Spleen (tissue), 13 donors: ENCODE measurements at regions of chr10 and their contacts with region 1.

Region 1: GRCh38 chr10:68156373-68157185 is 47.3 kb downstream of the MYPN start:
- DNase-seq: no peak
- H3K4me3 ChIP-seq: no peak overlapping the region
- H3K27ac ChIP-seq: no peak overlapping the region
- H3K4me1 ChIP-seq: peaks cover 0 to 26% (median 15%) of the 10 kb centered on the region in 6 donors
- H3K27me3 ChIP-seq: no peaks in the 10 kb centered on the region
- CTCF ChIP-seq: peak; percentile 55 to 85 (median 76)
- POLR2A ChIP-seq: no peak

Region 2: DNA sequence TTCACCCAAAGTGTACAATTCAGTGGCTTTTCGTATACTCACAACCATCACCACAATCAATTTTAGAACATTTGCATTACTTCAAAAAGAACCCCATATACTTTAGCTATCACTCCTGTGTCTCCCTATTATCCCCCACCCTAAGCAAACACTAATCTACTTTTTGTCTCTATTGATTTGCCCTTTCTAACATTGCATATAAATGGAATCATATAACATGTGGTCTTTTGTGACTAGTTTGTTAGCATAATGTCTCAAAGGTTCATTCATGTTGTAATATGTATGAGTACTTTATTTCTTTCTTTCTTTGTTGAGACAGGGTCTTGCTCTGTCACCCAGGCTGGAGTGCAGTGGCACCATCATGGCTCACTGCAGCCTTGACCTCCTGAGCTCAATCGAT is 297.6 kb before region 1 on chr10:
- intact Hi-C with region 1: loop called (anchors 5 kb)
- DNase-seq: no peak
- H3K4me3 ChIP-seq: no peak overlapping the region
- H3K27ac ChIP-seq: no peak overlapping the region
- H3K4me1 ChIP-seq: peaks cover 0 to 10% (median 2%) of the 10 kb centered on the region in 6 donors
- H3K27me3 ChIP-seq: no peaks in the 10 kb centered on the region
- CTCF ChIP-seq: no peak
- POLR2A ChIP-seq: no peak

Region 3: DNA sequence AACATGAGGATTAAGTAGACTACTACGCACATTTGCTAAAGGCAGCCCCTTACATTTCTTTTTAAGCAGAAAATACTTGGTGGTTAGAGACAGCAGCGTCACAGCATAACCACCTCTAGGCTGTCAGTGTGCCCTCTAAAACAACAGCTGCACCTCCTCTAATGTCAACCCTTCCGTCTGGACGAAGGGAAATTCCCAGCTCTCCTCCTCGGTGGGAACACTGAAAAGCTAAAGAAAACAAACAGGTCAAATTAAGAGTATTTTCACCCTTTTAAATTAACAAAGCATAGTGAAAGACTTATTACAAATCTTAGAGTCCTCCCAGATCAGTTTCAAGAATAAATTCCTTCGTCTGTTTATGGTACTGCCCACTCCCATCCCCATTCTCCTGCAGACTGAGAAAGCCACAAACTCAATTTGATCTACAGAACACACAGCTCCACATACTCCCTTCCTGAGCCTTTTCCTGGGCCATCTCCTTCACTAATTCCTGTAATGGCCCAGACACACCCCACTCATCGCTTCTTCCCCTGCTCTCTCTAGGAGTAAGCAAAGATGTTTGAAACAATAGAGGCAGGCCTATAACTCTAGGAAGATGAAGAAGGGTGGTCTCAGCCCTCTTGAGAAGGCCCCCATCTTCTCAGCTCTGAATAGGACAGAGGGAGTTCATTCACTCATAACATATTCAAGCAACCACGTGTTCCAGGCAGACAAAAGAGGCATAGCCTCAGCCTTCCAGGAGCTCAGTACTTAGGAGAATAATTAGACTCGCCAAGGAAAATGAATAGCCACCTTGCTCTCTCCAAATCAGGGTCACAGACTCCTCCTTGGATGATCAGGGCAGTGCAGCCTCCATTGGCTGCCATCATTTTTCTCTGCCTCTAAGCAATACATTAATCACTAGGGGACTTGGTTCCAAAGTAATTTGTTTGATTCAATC is 127.8 kb after region 1 on chr10:
- intact Hi-C with region 1: no loop called
- DNase-seq: no peak
- H3K4me3 ChIP-seq: no peak overlapping the region
- H3K27ac ChIP-seq: no peak overlapping the region
- H3K4me1 ChIP-seq: no peaks in the 10 kb centered on the region
- H3K27me3 ChIP-seq: no peaks in the 10 kb centered on the region
- CTCF ChIP-seq: no peak
- POLR2A ChIP-seq: no peak